ENCODE measurements at regions of chr7 and their contacts with region 1.

Region 1: GRCh38 chr7:83984076-83984475 is 210.5 kb downstream of the SEMA3A start:
- DNase-seq: no peak
- ATAC-seq: no peak

Region 2: DNA sequence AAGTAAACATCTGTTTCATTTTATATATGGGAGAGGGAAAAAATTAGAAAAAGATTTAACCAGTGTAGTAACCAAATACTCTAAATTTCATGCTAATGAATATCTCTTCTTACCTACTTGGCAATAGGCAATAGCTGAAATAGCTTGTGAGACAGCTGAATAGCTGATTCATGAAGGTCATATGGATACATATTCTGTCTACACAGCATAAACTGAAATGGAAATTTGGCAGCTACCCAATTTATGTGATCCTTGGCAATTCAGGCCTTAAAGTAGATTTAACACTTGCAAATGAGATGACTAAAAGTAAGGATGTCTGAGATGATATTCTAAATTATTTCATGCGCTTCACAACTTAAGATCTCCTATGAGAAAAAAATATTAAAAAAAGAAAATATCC is 471.7 kb after region 1 on chr7:
- intact Hi-C with region 1: loop called (anchors 5 kb)
- DNase-seq: no peak
- ATAC-seq: no peak